ENCODE measurements at regions of chr19 and their contacts with region 1.

Region 1: GRCh38 chr19:42132851-42133528 is 744 bp upstream of the POU2F2 start:
- DNase-seq: peak; percentile 79
- H3K4me3 Mint-ChIP-seq: peak overlapping the region; percentile 79
- H3K27ac Mint-ChIP-seq: peak overlapping the region; percentile 86
- H3K4me1 Mint-ChIP-seq: peaks cover 58% of the 10 kb centered on the region
- H3K27me3 Mint-ChIP-seq: no peaks in the 10 kb centered on the region

Region 2: DNA sequence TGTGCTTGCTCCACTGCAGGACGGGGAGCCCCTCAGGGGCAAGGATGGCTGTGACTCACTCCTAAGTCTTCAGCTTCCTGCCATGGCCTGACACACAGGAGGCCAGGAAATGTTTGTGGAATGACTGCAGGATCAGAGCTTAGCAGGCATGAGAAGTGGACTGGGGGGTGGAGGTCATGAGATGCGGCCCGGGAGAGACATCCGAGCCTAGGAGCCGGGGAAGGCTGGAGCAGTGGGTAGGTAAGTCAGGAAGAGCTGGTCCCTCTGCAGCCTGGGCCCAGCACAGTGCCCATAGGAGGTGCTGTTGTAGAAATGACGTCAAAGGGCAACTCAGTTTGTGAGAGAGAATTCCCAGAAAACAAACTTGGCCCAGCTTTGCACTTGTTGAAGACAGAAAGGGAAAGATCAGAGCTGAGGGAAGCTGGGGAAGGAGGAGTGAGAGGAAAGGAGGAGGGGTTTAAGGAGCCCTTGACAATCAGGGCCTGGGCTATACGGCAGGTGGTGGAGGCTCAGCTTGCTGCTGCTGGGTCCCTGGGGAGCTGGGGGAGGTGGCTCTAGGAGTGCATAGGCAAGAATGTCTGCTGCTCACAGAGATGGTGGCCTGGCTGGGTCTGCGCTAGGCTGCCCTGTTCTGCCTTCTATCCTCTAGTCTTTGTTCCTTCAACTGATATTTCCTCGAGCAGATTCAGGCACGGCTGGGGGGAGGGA is 19.2 kb before region 1 on chr19:
- CTCF ChIA-PET with region 1: interaction called, 86 read pairs
- intact Hi-C with region 1: loop called (anchors 1 kb)
- DNase-seq: no peak
- H3K4me3 Mint-ChIP-seq: no peak overlapping the region
- H3K27ac Mint-ChIP-seq: peak overlapping the region; percentile 85
- H3K4me1 Mint-ChIP-seq: peaks cover 43% of the 10 kb centered on the region
- H3K27me3 Mint-ChIP-seq: no peaks in the 10 kb centered on the region

Region 3: GRCh38 chr19:42184401-42184861 is 51.4 kb after region 1 on chr19:
- CTCF ChIA-PET with region 1: interaction called, 35 read pairs
- intact Hi-C with region 1: loop called (anchors 1 kb)
- DNase-seq: peak; percentile 86
- H3K4me3 Mint-ChIP-seq: no peak overlapping the region
- H3K27ac Mint-ChIP-seq: no peak overlapping the region
- H3K4me1 Mint-ChIP-seq: peaks cover 20% of the 10 kb centered on the region
- H3K27me3 Mint-ChIP-seq: peaks cover 6% of the 10 kb centered on the region

Region 4: DNA sequence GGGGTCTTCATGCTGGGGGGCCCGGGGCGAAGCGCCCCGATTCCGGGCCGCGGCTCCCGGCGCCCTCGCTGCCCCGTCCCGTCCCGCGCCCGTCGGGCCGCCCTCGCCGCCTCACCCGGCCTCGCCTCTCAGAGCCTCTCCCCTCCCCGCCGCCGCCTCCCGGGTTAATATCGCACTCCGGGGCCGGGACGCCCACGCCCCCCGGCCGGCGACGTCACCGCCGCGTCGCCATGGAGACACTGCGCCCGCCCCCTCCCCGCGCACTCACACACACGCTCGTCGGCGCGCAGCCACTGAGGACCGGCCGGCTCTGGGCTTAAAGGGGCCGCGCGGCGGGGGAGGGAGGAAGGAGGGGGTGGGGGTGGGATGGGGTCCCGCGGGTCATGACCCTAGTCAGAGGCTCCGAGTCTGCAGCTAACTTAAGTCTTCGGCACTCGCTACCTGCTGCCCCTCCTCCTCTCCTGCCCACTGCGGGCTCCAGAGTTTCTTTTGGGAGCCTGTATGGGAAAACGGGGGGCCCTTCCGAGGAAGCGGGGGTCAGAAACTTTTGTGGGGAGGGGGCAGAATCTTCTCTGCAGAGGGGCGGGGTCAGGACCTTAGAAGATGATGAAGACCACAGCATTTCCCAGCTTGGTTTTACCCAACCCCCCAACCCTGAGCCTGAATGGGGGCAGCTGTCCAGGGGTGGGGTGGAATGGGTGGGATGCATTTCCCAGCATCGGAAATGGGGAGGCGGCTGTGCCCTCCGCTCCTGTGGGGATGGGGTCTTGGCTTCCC is 122.2 kb after region 1 on chr19 and contains the start of gene ERF:
- CTCF ChIA-PET with region 1: no interaction called
- intact Hi-C with region 1: loop called (anchors 1 kb)
- DNase-seq: peak; percentile 93
- H3K4me3 Mint-ChIP-seq: peak within 1 kb of the TSS; percentile 73
- H3K27ac Mint-ChIP-seq: peak within 1 kb of the TSS; percentile 78
- H3K4me1 Mint-ChIP-seq: peaks cover 29% of the 10 kb centered on the region
- H3K27me3 Mint-ChIP-seq: no peaks in the 10 kb centered on the region
- total RNA-seq, gene ERF: 52.4 to 55.6 TPM

Region 5: GRCh38 chr19:42268704-42269477 is 135.9 kb after region 1 on chr19 and contains the start of gene CIC:
- CTCF ChIA-PET with region 1: no interaction called
- intact Hi-C with region 1: no loop called
- DNase-seq: peak; percentile 100
- H3K4me3 Mint-ChIP-seq: no peak within 1 kb of the TSS
- H3K27ac Mint-ChIP-seq: peak within 1 kb of the TSS; percentile 99
- H3K4me1 Mint-ChIP-seq: peaks cover 30% of the 10 kb centered on the region
- H3K27me3 Mint-ChIP-seq: no peaks in the 10 kb centered on the region
- total RNA-seq, gene CIC: 60.2 to 61.5 TPM

Region 6: DNA sequence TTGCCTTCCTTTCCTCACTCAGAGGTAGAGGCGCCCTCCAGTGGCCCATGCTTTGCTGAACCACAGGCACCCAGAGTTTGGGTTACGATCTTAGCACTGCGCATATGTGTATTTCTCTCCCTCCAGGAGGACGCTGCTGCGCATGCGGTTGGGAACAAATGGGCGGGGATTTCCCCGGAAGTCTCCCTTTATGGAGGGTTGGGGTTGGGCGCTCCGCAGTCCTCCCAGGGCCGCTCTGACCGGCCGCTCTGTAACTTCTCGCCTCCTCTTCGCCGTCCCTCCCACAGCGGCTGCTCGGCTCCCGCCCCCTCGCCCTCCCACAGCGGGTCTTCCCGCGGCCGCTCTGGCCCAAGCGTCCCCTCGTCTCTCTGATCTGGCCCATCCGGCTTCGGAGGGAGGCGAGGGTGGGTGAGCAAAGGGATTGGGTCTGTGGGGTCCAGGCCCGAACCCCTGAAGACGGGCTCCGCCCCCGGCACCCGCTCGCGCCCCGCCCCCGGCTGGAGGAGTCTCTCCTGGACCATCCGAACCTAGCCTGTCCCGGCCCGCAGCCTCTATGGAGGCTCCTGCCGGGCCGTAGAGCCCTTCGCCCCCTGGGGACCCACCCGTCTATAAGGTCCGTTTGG is 192.4 kb after region 1 on chr19 and contains the start of gene MEGF8:
- CTCF ChIA-PET with region 1: interaction called, 4 read pairs
- intact Hi-C with region 1: loop called (anchors 1 kb)
- DNase-seq: peak; percentile 100
- H3K4me3 Mint-ChIP-seq: peak within 1 kb of the TSS; percentile 81
- H3K27ac Mint-ChIP-seq: peak within 1 kb of the TSS; percentile 16
- H3K4me1 Mint-ChIP-seq: peaks cover 13% of the 10 kb centered on the region
- H3K27me3 Mint-ChIP-seq: peaks cover 14% of the 10 kb centered on the region
- total RNA-seq, gene MEGF8: 3.3 to 4.0 TPM

Region 7: DNA sequence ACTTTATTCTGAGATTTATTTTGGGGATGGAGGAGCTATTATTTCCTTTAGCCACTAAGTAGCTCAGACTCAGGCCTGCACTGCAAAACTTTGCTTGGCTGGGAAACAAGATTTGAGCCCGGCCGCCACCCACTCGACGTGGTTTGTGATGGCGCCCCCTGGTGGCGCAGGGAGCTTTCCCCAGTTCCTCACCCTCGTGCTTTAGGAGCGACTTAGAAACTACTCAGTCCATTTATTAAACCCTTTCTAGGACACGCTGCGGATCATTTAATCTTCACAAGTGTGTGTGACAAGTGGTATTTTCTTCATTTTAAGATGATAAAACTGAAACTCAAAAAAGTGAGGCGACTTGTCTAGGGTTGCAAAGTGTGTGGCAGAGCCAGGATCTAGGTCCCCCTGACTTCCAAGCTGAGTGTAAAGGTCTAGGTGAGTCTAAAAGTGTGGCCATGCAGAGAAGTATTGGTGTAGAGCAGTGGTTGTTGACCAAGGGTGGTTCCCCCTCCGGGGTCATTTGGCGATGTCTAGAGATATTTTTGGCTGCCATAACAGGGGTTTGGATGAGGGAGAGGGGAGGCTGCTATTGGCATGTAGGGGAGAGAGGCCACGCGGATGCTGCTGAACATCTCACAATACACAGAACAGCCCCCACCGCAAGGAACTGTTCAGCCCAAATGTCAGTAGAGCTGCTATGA is 307.5 kb after region 1 on chr19:
- CTCF ChIA-PET with region 1: interaction called, 4 read pairs
- intact Hi-C with region 1: loop called (anchors 2 kb)
- DNase-seq: peak; percentile 88
- H3K4me3 Mint-ChIP-seq: peak overlapping the region; percentile 3
- H3K27ac Mint-ChIP-seq: no peak overlapping the region
- H3K4me1 Mint-ChIP-seq: peaks cover 14% of the 10 kb centered on the region
- H3K27me3 Mint-ChIP-seq: no peaks in the 10 kb centered on the region